B cell (primary cell): ENCODE measurements at regions of chr5 and their contacts with region 1.

Region 1: GRCh38 chr5:140647042-140647341 is 438 bp downstream of the NDUFA2 start:
- DNase-seq: no peak
- ATAC-seq: no peak
- H3K4me3 ChIP-seq: peak overlapping the region; percentile 81 to 94 (median 89)
- H3K4me3 Mint-ChIP-seq: peak overlapping the region; percentile 99
- H3K27ac ChIP-seq: peak overlapping the region; percentile 88 to 93
- H3K27ac Mint-ChIP-seq: peak overlapping the region; percentile 98
- H3K4me1 ChIP-seq: peaks cover 15 to 20% of the 10 kb centered on the region in 2 donors
- H3K4me1 Mint-ChIP-seq: peaks cover 36% of the 10 kb centered on the region
- H3K27me3 ChIP-seq: no peaks in the 10 kb centered on the region
- H3K27me3 Mint-ChIP-seq: no peaks in the 10 kb centered on the region
- CTCF ChIP-seq: no peak

Region 2: DNA sequence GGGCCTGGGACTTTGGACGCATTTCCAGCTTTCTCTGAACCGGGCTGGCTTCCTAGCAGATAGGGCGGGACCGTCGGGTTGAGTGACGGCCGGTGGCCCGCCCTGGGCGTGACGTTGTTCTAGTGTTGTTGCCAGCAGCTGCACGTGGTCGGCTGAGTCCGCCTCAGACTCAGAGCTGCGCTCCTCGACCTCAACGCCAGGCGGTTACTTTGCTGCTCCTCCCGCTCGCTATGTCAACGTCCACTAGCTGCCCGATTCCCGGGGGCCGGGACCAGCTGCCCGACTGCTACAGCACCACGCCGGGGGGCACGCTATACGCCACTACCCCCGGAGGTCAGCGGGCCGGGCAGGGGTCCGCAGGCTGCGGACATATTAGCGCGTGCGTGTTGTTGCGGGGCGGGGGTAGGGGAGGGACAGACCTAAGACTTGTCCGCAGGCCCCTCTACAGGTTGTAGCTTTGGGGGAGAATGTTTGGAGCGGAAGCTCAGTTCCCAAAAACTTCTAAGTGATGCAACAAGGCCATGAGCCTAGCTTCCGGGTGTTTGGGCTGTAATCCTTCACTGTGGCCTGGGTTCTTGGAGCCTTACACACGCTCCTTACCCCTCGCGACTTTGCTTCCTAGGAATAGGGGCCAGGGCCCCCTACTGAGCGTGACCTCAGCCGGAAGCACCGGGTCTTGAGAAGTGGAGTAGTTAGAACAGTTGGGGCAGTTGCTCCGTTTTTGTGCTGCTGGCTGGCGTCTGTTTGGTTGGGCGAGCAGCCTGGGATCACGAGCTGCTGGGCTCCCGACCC is 99.3 kb before region 1 on chr5 and contains the start of gene EIF4EBP3:
- CTCF ChIA-PET with region 1: interaction called, 16 read pairs
- POLR2A ChIA-PET with region 1: no interaction called
- intact Hi-C with region 1: loop called (anchors 1 kb)
- DNase-seq: peak; percentile 91
- ATAC-seq: peak; percentile 97
- H3K4me3 ChIP-seq: peak within 1 kb of the TSS; percentile 35 to 93 (median 79)
- H3K4me3 Mint-ChIP-seq: peak within 1 kb of the TSS; percentile 94
- H3K27ac ChIP-seq: peak within 1 kb of the TSS; percentile 81 to 85
- H3K27ac Mint-ChIP-seq: peak within 1 kb of the TSS; percentile 94
- H3K4me1 ChIP-seq: peaks cover 10 to 30% of the 10 kb centered on the region in 2 donors
- H3K4me1 Mint-ChIP-seq: peaks cover 30% of the 10 kb centered on the region
- H3K27me3 ChIP-seq: no peaks in the 10 kb centered on the region
- H3K27me3 Mint-ChIP-seq: no peaks in the 10 kb centered on the region
- CTCF ChIP-seq: peak; percentile 77
- total RNA-seq, gene EIF4EBP3: 8.8 and 15.0 TPM in 2 replicates

Region 3: DNA sequence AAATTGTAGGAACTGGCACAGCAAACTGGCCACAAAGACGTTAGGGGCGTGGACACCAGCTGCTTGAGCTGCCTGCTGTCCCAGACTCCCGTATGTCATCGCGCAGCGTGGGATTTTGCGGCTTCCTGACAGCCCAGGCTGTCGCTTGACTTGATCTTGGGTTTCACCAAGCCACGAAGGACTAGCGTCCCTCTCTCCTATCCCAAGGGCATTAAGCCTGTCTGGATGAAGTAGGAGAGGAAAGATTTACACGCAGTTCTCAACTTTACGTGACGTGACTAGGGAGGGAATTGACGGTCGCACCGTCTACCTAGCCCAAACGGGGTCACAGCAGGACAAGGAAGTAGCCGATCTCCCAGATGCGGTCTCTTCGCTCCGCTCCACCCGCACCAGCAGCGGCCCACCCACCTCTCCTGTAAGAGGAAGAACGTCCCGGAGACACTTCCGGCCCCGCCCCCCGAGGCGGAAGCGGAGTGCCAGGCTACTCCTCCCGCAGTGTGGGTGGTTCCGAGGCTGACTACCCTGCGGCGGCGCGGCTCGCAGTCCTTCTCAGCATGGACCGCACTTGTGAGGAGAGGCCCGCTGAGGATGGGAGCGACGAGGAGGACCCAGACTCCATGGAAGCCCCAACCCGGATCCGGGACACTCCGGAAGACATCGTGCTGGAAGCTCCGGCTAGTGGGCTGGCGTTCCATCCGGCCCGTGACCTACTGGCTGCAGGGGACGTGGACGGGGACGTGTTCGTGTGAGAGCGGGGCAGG is 17.5 kb after region 1 on chr5 and contains the start of gene WDR55:
- CTCF ChIA-PET with region 1: interaction called, 5 read pairs
- POLR2A ChIA-PET with region 1: interaction called, 19 read pairs
- intact Hi-C with region 1: loop called (anchors 1 kb)
- DNase-seq: peak; percentile 94
- ATAC-seq: peak; percentile 97
- H3K4me3 ChIP-seq: peak within 1 kb of the TSS; percentile 56 to 99 (median 98)
- H3K4me3 Mint-ChIP-seq: peak within 1 kb of the TSS; percentile 99
- H3K27ac ChIP-seq: peak within 1 kb of the TSS; percentile 74 to 88
- H3K27ac Mint-ChIP-seq: peak within 1 kb of the TSS; percentile 98
- H3K4me1 ChIP-seq: peaks cover 14 to 17% of the 10 kb centered on the region in 2 donors
- H3K4me1 Mint-ChIP-seq: peaks cover 30% of the 10 kb centered on the region
- H3K27me3 ChIP-seq: no peaks in the 10 kb centered on the region
- H3K27me3 Mint-ChIP-seq: no peaks in the 10 kb centered on the region
- CTCF ChIP-seq: no peak
- total RNA-seq, gene WDR55: 44.7 and 46.2 TPM in 2 replicates

Region 4: GRCh38 chr5:140690941-140691924 is 44.2 kb after region 1 on chr5 and contains the starts of genes HARS1 and HARS2:
- CTCF ChIA-PET with region 1: interaction called, 5 read pairs
- POLR2A ChIA-PET with region 1: interaction called, 13 read pairs
- intact Hi-C with region 1: loop called (anchors 1 kb)
- DNase-seq: peak; percentile 87
- ATAC-seq: peak; percentile 97
- H3K4me3 ChIP-seq: peak within 1 kb of the TSS; percentile 89 to 98 (median 97)
- H3K4me3 Mint-ChIP-seq: peak within 1 kb of the TSS; percentile 99
- H3K27ac ChIP-seq: peak within 1 kb of the TSS; percentile 68 to 81
- H3K27ac Mint-ChIP-seq: peak within 1 kb of the TSS; percentile 94
- H3K4me1 ChIP-seq: peaks cover 14% of the 10 kb centered on the region in 2 donors
- H3K4me1 Mint-ChIP-seq: peaks cover 30% of the 10 kb centered on the region
- H3K27me3 ChIP-seq: no peaks in the 10 kb centered on the region
- H3K27me3 Mint-ChIP-seq: no peaks in the 10 kb centered on the region
- CTCF ChIP-seq: no peak
- total RNA-seq, gene HARS1: 60.5 and 65.6 TPM in 2 replicates
- total RNA-seq, gene HARS2: 65.1 and 68.0 TPM in 2 replicates

Region 5: DNA sequence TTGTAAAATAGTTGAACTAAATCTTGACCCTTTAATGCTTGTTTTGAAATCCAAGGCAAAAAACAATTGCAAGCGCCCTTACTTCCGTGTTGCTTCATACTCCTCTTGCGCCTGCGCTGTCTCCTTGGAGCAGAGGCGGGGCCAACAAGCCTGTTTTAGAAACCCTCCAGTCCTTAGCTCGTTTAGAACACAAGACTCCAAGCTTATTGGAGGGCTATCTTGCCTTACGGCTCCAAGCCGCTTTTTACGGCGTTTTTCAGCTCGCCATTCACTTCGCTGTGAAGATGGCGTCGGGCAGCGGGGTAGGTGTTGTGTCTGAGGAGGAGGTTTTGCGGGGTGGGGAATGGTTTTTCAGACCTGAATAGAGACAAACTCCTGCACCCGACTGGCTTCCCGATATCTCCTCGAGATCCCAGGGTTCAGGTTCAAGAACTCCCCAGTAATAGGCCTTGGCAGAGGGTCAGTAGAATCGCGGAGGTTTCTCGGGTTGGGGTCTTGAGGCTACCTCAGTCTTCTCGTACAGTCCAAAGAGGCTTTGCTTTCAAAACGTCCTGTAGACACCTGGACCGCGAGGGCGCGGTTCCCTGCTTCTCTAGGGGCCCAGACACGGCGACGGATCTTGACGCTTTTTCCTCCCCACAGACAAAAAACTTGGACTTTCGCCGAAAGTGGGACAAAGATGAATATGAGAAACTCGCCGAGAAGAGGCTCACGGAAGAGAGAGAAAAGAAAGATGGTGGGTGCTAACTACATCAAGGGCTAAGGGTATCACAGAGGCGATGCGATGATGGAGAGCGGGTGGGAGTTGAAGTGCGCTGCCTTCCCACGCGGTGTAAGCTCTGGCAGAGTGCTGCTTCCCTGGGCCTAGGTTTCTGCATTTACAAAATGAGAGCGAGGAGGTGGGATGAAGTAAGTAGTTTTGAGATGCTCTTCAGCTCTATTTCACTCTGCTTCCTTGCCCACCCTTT is 53.5 kb after region 1 on chr5 and contains the start of gene ZMAT2:
- CTCF ChIA-PET with region 1: no interaction called
- POLR2A ChIA-PET with region 1: no interaction called
- intact Hi-C with region 1: loop called (anchors 1 kb)
- DNase-seq: peak; percentile 96
- ATAC-seq: peak; percentile 99
- H3K4me3 ChIP-seq: peak within 1 kb of the TSS; percentile 58 to 97 (median 92)
- H3K4me3 Mint-ChIP-seq: peak within 1 kb of the TSS; percentile 96
- H3K27ac ChIP-seq: peak within 1 kb of the TSS; percentile 46 to 77
- H3K27ac Mint-ChIP-seq: peak within 1 kb of the TSS; percentile 91
- H3K4me1 ChIP-seq: peaks cover 13 to 16% of the 10 kb centered on the region in 2 donors
- H3K4me1 Mint-ChIP-seq: peaks cover 23% of the 10 kb centered on the region
- H3K27me3 ChIP-seq: no peaks in the 10 kb centered on the region
- H3K27me3 Mint-ChIP-seq: no peaks in the 10 kb centered on the region
- CTCF ChIP-seq: no peak
- total RNA-seq, gene ZMAT2: 55.7 and 55.8 TPM in 2 replicates

Region 6: GRCh38 chr5:140785905-140786686 is 139.1 kb after region 1 on chr5 and contains the start of gene PCDHA1:
- CTCF ChIA-PET with region 1: no interaction called
- POLR2A ChIA-PET with region 1: no interaction called
- intact Hi-C with region 1: no loop called
- DNase-seq: no peak
- ATAC-seq: no peak
- H3K4me3 ChIP-seq: no peak within 1 kb of the TSS
- H3K4me3 Mint-ChIP-seq: no peak within 1 kb of the TSS
- H3K27ac ChIP-seq: no peak within 1 kb of the TSS
- H3K27ac Mint-ChIP-seq: no peak within 1 kb of the TSS
- H3K4me1 ChIP-seq: no peaks in the 10 kb centered on the region
- H3K4me1 Mint-ChIP-seq: no peaks in the 10 kb centered on the region
- H3K27me3 ChIP-seq: peaks cover 0 to 20% (median 5%) of the 10 kb centered on the region in 4 experiments
- H3K27me3 Mint-ChIP-seq: peaks cover 19% of the 10 kb centered on the region
- CTCF ChIP-seq: no peak
- total RNA-seq, gene PCDHA1: not detected in 2 replicates